ENCODE measurements at regions of chr1 and their contacts with region 1.

Region 1: DNA sequence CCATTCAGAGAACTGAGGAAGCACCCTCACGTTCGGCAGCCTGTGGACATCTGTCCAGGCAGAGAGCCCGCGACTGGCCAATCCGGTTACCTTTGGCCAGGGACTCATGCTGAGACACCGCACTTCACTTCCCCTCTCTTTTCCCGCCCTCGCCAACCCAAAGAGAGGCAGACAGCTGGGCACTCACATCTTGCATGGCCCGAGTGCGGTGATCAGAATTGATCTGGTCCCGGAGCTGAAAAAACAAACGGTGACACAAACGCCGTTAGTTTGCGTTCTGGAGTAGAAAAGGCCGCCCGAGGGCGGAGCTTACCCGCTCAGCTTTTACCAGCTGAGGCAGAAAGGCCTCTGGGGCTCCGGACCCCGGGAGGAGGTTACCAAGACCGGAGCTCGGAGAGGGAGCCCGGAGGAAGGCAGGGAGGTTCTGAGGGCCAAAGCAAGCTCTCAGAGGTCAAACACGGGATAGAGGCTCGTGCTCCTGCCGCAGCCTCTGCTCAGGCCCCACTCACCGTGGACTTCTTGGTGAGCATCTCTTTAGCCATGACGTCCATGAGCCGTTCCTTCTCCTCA is 376 bp downstream of the SF3A3 start:
- H3K4me3 Mint-ChIP-seq: peak overlapping the region; percentile 82
- H3K27ac Mint-ChIP-seq: peak overlapping the region; percentile 89
- H3K4me1 Mint-ChIP-seq: peaks cover 18% of the 10 kb centered on the region
- H3K27me3 Mint-ChIP-seq: no peaks in the 10 kb centered on the region

Region 2: DNA sequence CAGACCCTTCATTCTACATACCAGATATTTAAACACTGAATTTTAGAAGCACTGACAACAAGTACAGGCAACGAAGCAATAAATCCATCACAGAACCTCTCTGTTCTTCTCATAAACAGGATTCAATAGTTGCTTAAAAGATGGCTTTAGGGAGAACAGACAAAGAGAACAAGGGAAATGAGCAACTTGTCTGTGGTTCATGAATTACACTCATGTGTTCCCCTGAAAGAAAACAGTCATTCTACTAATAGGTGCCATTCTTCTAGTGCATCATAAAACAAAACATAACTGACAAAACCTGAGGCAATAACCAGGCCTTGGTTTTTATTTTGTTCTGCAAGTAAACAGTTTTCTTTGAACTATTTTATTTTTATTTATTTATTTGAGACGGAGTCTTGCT is 400.5 kb before region 1 on chr1:
- intact Hi-C with region 1: loop called (anchors 10 kb)
- H3K4me3 Mint-ChIP-seq: no peak overlapping the region
- H3K27ac Mint-ChIP-seq: no peak overlapping the region
- H3K4me1 Mint-ChIP-seq: no peaks in the 10 kb centered on the region
- H3K27me3 Mint-ChIP-seq: no peaks in the 10 kb centered on the region

Region 3: GRCh38 chr1:38018864-38019343 is 29.5 kb after region 1 on chr1:
- intact Hi-C with region 1: loop called (anchors 2 kb)
- H3K4me3 Mint-ChIP-seq: no peak overlapping the region
- H3K27ac Mint-ChIP-seq: no peak overlapping the region
- H3K4me1 Mint-ChIP-seq: peaks cover 14% of the 10 kb centered on the region
- H3K27me3 Mint-ChIP-seq: no peaks in the 10 kb centered on the region

Region 4: GRCh38 chr1:38037221-38037939 is 47.9 kb after region 1 on chr1:
- intact Hi-C with region 1: no loop called
- H3K4me3 Mint-ChIP-seq: no peak overlapping the region
- H3K27ac Mint-ChIP-seq: no peak overlapping the region
- H3K4me1 Mint-ChIP-seq: no peaks in the 10 kb centered on the region
- H3K27me3 Mint-ChIP-seq: peaks cover 35% of the 10 kb centered on the region